Psoas muscle (tissue), 8 donors: ENCODE measurements at regions of chr2 and their contacts with region 1.

Region 1: GRCh38 chr2:152335010-152335725 is at the start of gene FMNL2:
- DNase-seq: peak; percentile 90 to 93
- ATAC-seq: peak; percentile 90 to 94 (median 92)
- H3K4me3 ChIP-seq: peak within 1 kb of the TSS; percentile 97
- H3K27ac ChIP-seq: peak within 1 kb of the TSS; percentile 92
- H3K4me1 ChIP-seq: peaks cover 29% of the 10 kb centered on the region
- H3K27me3 ChIP-seq: no peaks in the 10 kb centered on the region
- CTCF ChIP-seq: no peak
- total RNA-seq, gene FMNL2: 8.4 to 18.2 (median 10.1) TPM

Region 2: DNA sequence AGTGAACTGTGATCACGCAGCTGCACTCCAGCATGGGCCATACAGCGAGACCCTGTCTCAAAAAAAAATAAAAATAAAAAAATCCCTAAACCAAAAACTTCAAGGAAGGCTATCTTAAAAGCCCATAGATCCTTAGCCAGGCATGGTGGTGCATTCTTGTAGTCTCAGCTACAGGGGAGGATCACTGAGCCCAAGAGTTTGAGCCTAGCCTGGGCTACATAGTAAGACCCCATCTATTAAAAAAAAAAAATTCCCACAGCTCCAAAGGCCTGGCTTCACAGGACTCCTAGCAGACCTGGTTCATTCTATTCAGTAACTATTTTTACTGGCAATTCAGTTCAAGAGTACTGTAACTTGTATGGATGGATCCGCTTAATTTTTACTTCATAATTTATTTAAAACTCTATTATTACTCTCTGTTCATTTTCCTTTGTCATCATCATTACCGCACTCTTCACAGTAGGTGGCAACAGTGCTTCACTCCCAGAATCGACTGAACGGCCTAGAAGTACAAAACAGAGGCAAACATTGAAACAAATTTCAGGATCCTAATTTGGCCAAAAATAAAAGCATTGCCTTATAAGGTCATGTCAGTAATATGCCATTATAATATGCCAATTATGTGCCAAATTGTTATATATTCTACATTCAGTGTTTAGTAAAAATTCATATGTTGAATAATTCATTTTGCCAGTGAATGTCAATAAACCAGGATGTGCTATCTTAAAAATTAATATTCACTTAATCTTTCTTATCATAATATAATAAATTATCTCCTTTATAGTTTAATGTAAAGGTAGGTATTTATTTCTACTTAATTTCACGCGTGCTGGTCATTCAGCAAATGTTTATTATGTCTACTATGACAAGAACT is 145.3 kb before region 1 on chr2:
- intact Hi-C with region 1: loop called (anchors 5 to 10 kb)
- DNase-seq: no peak
- ATAC-seq: peak; percentile 78 to 95 (median 88)
- H3K4me3 ChIP-seq: no peak overlapping the region
- H3K27ac ChIP-seq: no peak overlapping the region
- H3K4me1 ChIP-seq: no peaks in the 10 kb centered on the region
- H3K27me3 ChIP-seq: no peaks in the 10 kb centered on the region
- CTCF ChIP-seq: peak; percentile 89

Region 3: DNA sequence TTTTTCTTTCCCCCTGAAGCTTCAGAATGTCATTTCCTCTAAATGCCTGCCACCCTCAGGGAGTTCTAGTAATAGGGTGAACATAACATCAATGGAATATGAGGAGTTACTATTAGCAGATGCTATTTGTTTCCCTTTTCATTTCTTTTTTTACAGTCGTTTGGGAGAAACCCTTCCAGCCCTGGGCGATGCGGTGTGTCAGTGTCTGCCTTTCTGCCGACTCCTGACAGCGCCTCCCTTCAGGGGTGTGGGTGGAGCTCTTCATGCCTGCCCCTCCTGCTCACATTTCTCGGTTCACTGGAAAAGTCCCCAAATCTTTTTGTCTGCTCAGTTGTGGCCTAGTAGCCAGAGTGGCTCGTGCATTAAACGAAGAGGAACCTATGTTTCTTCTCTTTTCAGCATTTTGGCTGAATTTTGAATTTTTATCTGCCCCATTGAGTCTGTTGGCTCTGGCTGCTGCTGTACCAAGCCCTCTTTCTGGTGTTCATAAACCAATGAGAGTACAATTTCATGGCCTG is 72.1 kb after region 1 on chr2:
- intact Hi-C with region 1: loop called (anchors 5 to 10 kb)
- DNase-seq: peak; percentile 41 to 62
- ATAC-seq: peak; percentile 56 to 68 (median 63)
- H3K4me3 ChIP-seq: peak overlapping the region; percentile 40
- H3K27ac ChIP-seq: peak overlapping the region; percentile 32
- H3K4me1 ChIP-seq: peaks cover 70% of the 10 kb centered on the region
- H3K27me3 ChIP-seq: no peaks in the 10 kb centered on the region
- CTCF ChIP-seq: no peak

Region 4: DNA sequence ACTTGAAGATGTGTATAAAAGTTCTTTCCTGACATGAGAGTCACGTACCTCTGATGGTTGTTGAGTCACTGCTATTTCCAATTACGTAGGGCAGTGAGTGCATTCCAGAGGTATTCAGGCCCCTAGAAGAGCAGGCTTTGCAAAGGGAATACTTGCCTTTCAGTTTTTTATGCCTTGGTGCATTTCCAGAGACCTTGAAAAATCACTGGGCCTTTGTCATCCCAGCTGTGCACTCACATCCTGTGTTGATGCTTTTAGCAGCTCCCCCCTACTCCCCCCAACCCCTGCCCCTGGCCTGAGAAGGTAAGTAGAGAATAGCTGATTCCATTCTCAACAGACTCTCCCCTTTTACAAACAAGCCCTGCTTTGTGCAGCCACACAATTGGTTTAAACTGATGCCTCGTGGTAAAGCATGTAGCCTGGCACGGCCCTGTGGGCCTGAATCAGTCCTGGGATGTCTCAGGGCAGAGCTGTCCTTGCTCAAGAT is 207.9 kb after region 1 on chr2:
- intact Hi-C with region 1: loop called in 1 of 2 experiments (anchors 10 kb)
- DNase-seq: no peak
- ATAC-seq: peak; percentile 55 to 73 (median 60)
- H3K4me3 ChIP-seq: no peak overlapping the region
- H3K27ac ChIP-seq: peak overlapping the region; percentile 84
- H3K4me1 ChIP-seq: peaks cover 57% of the 10 kb centered on the region
- H3K27me3 ChIP-seq: no peaks in the 10 kb centered on the region
- CTCF ChIP-seq: no peak

Region 5: DNA sequence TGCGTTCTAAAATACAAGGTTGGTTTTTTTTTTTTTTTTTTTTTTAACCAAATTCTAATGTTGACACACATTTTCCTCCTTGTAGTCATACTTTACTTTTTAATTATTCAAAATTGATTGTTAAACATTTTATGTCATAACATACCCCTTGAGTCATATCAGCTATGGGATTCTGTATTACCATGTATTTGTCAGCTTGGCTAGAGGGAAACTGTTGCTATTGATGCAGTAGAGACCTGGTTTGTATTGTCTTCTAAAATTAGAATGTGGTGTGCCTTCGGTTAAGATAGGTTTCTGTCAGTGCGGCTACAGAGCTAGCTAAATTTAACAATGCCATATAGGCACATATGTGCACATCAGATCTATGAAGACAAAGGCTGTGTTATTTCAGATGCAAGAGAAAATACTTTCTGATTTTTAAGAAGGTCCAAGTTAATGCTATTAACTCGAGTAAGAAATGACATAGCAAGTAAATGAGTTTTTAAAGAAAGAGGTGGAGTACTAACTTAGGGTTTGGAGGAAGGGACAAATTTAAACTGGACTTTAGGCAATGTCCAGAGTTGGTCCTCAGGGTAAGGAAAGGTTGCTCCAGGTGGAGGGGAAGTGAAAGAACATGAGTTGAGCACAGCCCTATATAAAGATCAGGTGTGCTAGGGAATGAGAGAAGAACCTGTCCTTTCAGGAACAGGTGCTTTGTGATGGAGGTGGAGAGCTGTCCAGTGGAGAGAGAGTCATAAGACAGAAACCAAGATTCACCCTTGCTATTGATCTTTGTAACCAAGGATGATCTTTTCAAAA is 229.8 kb after region 1 on chr2:
- intact Hi-C with region 1: loop called in 1 of 2 experiments (anchors 5 kb)
- DNase-seq: no peak
- ATAC-seq: peak in 2 of 4 donors; percentile 34 to 39
- H3K4me3 ChIP-seq: no peak overlapping the region
- H3K27ac ChIP-seq: no peak overlapping the region
- H3K4me1 ChIP-seq: peaks cover 10% of the 10 kb centered on the region
- H3K27me3 ChIP-seq: no peaks in the 10 kb centered on the region
- CTCF ChIP-seq: no peak

Region 6: GRCh38 chr2:152627351-152627957 is 292.3 kb after region 1 on chr2:
- intact Hi-C with region 1: loop called (anchors 5 kb)
- DNase-seq: no peak
- ATAC-seq: peak; percentile 63 to 90 (median 75)
- H3K4me3 ChIP-seq: no peak overlapping the region
- H3K27ac ChIP-seq: no peak overlapping the region
- H3K4me1 ChIP-seq: peaks cover 12% of the 10 kb centered on the region
- H3K27me3 ChIP-seq: no peaks in the 10 kb centered on the region
- CTCF ChIP-seq: peak; percentile 61

Region 7: DNA sequence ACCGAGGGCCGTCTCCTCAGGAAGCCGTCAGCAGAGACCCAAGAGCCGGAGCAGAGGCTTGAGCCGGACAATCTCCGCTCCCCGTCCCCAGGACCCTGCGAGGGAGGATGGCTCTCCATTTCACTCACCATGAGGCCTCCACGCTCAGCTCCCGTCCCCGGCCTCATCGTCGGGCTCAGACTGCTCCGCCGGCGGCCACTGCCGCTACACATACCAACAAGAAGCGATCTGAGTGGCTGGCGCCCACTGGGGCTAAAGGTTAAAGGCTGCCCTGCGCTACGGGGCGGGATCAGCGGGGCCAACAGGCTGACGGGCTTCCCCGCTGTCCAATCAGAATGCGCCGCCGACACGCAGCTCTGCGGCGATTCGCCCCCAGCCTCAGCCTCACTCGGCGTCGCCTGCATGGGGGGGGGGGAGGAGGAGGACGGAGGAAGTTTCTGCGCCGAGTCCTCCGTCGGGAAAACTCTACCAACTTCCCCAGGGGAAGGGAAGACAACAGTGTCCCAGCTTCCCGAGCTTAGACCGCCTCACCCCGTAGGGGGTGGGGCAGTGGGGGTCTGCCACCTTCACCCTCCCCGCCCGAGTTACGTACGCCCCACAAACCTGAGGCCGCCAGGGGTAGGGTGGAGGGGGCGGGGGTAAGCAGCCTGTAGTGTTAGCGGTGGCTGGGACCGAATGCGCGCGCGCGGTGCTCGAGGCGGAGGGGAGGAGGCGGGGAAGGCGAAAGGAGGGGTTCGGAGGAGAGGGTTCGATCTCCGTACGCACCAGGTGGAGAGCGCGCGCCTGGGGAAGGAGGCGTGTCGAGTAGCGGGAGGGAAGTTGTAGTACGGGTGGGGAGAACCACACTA is 382.3 kb after region 1 on chr2 and contains the start of gene PRPF40A:
- intact Hi-C with region 1: loop called in 1 of 2 experiments (anchors 10 kb)
- DNase-seq: peak; percentile 99 to 100
- ATAC-seq: peak; percentile 91 to 94 (median 92)
- H3K4me3 ChIP-seq: peak within 1 kb of the TSS; percentile 79
- H3K27ac ChIP-seq: peak within 1 kb of the TSS; percentile 97
- H3K4me1 ChIP-seq: peaks cover 49% of the 10 kb centered on the region
- H3K27me3 ChIP-seq: no peaks in the 10 kb centered on the region
- CTCF ChIP-seq: no peak
- total RNA-seq, gene PRPF40A: 38.7 to 53.7 (median 45.8) TPM